ENCODE measurements at regions of chr22 and their contacts with region 1.

Region 1: GRCh38 chr22:19432133-19432851 is at the start of gene MRPL40:
- DNase-seq: peak; percentile 86 to 99 (median 94)

Region 2: DNA sequence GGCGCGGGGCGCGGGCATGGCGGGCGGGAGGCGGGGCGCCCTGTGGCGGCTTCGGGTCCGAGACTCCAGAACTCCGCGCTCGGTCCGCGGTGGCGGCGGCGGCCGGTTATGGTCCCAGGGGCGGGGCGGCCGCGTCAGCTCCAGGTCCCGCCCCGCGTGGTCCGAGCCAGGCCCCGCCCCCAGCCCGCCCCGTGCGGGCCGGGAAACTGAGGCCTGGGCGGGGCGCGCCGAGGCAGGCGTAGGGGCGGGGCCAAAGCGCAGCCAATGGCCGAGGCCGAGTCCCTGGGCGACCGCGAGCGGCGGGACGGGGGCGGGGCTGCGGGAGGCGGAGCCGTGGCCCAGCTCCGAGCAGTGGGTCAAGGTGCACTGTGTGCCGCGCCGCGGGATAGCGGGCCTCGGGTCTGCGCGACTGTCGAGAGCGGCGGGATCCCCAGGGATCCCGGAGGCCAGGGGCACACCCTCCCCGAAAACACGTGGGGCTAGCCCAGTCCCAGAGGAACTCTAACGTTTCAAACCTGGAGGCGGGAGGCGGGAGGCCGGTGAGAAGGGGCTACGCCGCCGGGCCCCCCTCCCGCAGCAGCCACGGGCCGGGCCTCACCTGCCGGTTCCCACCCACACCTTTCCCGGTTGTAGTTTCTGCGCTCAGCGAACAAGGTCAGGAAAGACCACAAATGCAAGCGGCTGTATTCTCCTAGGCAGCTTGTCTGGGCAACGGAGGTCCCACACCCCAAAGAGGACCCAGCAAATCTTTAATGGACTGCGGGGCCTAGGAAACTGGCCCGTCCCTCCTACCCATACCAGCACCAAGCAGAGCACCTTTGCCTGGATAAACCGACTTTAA is 253.4 kb before region 1 on chr22 and contains the start of gene SLC25A1:
- intact Hi-C with region 1: loop called (anchors 1 kb)
- DNase-seq: peak; percentile 83 to 99 (median 92)

Region 3: GRCh38 chr22:19291580-19292457 is 140.5 kb before region 1 on chr22 and contains the start of gene CLTCL1:
- intact Hi-C with region 1: loop called (anchors 5 kb)
- DNase-seq: peak; percentile 56 to 96 (median 72)

Region 4: DNA sequence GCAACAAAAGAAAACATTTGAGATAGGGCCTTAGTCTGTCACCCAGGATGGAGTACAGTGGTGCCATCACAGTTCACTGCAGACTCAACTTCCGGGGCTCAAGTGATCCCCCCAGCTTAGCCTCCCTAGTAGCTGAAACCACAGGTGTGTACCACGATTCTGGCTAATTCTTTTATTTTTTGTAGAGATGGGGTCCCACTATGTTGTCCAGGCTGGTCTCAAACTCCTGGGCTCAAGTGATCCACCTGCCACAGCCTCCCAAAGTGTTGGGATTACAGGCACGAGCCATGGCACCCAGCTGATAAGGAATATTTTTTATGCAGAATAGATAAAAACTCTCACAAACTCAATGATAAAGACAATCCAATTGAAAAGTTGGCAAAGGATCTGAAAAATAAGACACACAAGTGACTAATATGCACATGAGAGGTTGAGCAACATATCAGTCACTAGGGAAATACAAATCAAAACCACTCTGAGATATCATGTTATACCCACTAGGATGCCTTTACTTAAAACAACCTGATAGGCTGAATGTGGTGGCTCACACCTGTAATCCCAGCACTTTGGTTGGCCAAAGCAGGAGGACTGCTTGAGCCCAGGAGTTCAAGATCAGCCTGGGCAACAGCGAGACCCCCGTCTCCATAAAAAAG is 106.9 kb before region 1 on chr22:
- intact Hi-C with region 1: no loop called
- DNase-seq: no peak

Region 5: GRCh38 chr22:19447388-19448075 is 15.2 kb after region 1 on chr22 and contains the start of gene C22orf39:
- intact Hi-C with region 1: loop called (anchors 1 kb)
- DNase-seq: peak; percentile 91 to 99 (median 95)

Region 6: DNA sequence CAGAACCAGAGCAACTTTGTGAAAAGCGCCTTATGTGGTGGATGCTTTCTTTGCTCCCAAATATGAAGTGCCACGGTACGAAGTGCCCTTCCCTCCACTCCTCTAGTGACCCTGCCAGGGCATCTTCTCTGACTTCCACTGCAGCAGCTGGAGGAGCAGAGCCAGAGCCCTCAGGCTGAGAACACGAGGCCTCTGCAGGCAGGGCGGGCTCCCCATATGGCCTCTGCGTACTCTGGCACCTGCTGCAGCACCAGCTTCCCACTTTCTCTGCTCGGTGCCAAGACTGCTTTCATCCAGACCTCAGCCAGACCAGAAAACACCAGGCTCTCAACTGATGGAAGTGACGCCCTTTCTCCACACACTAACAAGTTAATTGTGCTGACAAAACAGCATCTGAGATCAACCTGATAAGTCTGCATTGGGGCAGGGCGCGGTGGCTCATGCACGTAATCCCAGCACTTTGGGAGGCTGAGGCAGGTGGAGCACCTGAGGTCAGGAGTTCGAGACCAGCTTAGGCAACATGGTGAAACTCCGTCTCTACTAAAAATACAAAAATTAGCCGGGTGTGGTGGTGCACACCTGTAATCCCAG is 33.9 kb after region 1 on chr22:
- intact Hi-C with region 1: no loop called
- DNase-seq: peak in 1 of 10 donors; percentile 86

Region 7: GRCh38 chr22:19479357-19480172 is 47.3 kb after region 1 on chr22 and contains the start of gene CDC45:
- intact Hi-C with region 1: loop called (anchors 5 kb)
- DNase-seq: peak; percentile 93 to 99 (median 96)

Measured in posterior cingulate gyrus (tissue), 11 donors.